Caco-2 (cell line): ENCODE measurements at regions of chr1 and their contacts with region 1.

Region 1: DNA sequence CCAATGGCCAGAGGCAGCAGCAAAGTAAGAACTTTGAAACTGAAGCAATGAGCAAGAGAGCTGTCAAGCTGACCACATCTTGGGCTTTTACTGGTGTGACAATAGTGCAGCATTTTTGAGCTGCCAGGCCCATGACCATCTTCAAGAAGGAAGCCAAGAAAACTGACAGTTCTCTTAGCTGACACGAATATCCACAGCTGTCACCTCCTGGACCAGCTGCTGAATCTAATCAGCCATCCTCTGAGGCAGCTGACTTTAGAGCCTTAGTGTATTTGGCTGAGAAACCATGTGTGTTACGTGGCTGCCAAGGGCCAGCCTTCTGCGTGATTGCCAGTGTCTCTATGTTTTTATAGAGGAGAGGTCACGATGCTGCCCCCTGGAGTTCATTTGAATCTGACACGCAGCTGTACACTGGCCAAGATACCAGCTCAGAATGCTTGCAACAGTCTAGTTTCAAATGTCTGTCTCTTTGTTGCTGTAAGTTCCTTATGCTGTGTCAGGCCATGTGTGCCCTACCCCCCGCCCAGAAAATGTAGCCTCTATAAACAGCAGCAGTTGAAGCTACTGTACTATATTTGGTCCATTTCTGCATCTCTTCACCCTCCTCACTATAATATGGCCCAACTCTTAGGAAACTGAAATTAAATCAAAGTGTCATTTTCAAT is 39.7 kb downstream of the PALMD start:
- DNase-seq: peak; percentile 47 to 60
- H3K4me3 ChIP-seq: no peak overlapping the region
- H3K4me3 Mint-ChIP-seq: no peak overlapping the region
- H3K27ac Mint-ChIP-seq: no peak overlapping the region
- H3K4me1 ChIP-seq: no peaks in the 10 kb centered on the region
- H3K4me1 Mint-ChIP-seq: no peaks in the 10 kb centered on the region
- H3K27me3 ChIP-seq: no peaks in the 10 kb centered on the region
- H3K27me3 Mint-ChIP-seq: no peaks in the 10 kb centered on the region
- CTCF ChIP-seq: peak; percentile 46 to 47

Region 2: DNA sequence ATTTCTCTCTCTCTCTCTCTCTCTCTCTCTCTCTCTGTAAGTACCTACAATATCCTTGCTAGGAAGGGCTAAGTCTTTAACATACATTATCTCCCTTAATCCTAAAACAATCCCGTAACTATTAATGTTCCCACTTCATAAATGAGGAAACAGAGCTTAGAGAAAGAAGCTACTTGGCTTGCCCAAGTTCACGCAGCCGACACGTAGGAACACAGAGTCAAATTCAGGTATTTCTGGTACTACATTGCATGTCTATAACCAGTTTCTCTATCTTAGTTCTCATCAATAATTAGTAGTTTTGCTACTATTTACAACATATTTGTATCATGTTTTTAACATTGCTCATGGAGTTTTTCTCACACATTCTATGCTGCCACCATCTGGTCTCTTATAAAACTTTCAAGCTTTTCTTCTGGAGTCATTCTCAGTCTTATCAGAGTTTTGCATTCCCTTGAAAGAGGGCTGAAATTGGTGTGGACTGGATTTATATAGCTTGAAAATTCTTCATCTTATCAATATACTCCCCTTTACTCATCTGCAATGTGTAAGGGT is 158.6 kb before region 1 on chr1:
- CTCF ChIA-PET with region 1: no interaction called
- POLR2A ChIA-PET with region 1: no interaction called
- intact Hi-C with region 1: loop called (anchors 1 kb)
- DNase-seq: no peak
- H3K4me3 ChIP-seq: no peak overlapping the region
- H3K4me3 Mint-ChIP-seq: no peak overlapping the region
- H3K27ac Mint-ChIP-seq: no peak overlapping the region
- H3K4me1 ChIP-seq: no peaks in the 10 kb centered on the region
- H3K4me1 Mint-ChIP-seq: no peaks in the 10 kb centered on the region
- H3K27me3 ChIP-seq: no peaks in the 10 kb centered on the region
- H3K27me3 Mint-ChIP-seq: no peaks in the 10 kb centered on the region
- CTCF ChIP-seq: peak in 1 of 2 experiments; percentile 26

Region 3: DNA sequence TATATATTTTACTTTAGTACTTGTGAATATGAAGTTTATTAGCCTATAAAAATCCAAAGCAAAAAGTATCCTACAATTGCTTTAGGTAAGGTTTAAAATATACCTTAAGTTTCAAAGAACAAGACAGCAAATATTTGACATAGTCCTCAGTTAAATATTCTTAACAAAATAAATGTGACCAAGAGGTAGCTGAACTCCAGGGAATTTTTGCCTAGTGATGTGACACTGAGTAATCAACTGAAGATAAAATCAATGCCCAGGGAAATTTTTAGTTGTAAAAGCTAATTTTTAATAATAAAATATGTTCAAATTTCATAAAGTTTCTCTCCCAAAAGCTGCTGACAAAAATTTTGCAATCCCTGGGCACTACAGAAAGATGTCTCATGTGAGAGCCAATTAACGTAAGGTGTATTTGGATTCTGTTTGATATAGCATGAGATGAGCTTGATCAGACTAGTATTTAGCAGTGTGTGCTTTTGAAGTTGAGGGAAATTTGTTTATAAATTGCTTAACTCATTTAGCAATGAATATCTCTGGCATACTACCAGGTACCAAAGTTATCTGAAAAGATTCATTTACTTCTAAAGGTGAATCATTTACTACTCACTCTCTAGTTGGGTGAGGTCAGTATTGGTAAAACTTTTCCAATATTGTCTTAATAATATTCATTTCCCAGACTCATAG is 119.9 kb before region 1 on chr1:
- CTCF ChIA-PET with region 1: no interaction called
- POLR2A ChIA-PET with region 1: no interaction called
- intact Hi-C with region 1: loop called (anchors 10 kb)
- DNase-seq: no peak
- H3K4me3 ChIP-seq: no peak overlapping the region
- H3K4me3 Mint-ChIP-seq: no peak overlapping the region
- H3K27ac Mint-ChIP-seq: no peak overlapping the region
- H3K4me1 ChIP-seq: peaks cover 13% of the 10 kb centered on the region; the same call in 1 of the 2 replicates
- H3K4me1 Mint-ChIP-seq: peaks cover 11% of the 10 kb centered on the region
- H3K27me3 ChIP-seq: no peaks in the 10 kb centered on the region
- H3K27me3 Mint-ChIP-seq: no peaks in the 10 kb centered on the region
- CTCF ChIP-seq: no peak

Region 4: GRCh38 chr1:99737016-99737415 is 51.4 kb after region 1 on chr1:
- CTCF ChIA-PET with region 1: no interaction called
- POLR2A ChIA-PET with region 1: no interaction called
- intact Hi-C with region 1: loop called (anchors 2 kb)
- DNase-seq: peak; percentile 34 to 45
- H3K4me3 ChIP-seq: no peak overlapping the region
- H3K4me3 Mint-ChIP-seq: no peak overlapping the region
- H3K27ac Mint-ChIP-seq: no peak overlapping the region
- H3K4me1 ChIP-seq: peaks cover 13% of the 10 kb centered on the region
- H3K4me1 Mint-ChIP-seq: peaks cover 12% of the 10 kb centered on the region
- H3K27me3 ChIP-seq: no peaks in the 10 kb centered on the region
- H3K27me3 Mint-ChIP-seq: no peaks in the 10 kb centered on the region
- CTCF ChIP-seq: peak in 1 of 2 experiments; percentile 37